ENCODE measurements at regions of chr20 and their contacts with region 1.

Region 1: DNA sequence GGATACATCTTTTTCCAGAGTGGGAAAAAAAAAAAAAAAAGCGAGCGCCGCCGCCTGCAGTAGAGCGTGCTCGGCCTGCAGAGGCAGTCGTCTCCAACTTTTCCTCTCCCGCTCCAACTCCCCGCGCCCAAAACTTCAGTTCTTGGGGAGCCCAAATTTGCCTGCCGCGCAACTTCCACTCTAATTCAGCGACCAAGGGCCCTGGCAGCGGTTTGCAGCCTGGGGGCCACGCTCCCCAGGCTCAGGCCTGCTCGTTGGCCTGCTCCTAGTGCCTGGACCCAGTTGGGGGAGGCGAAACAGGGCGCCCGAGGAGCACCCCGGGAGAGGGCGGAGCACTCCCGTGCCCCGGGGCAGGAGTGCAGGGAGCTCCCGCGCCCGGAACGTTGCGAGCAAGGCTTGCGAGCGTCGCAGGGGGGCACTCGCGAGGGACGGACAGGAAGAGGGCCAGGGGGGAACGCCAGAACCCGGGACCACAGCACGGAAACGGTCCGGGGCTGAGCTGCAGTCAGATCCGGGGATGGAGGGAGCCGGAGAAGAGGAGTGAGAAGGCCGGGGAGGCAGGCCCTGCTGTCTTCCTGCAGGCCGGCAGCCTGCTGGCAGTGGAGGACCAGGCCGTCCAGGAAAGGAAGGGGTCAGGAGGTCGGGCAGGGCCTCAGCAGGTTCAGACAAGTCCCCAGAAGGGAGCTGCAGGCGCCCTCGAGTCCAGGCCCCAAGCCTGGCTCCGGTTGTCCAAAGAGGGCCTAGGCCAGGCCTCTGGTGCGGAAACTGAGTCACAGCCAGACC is at the start of gene STX16:
- DNase-seq: peak; percentile 76 to 87 (median 84)
- ATAC-seq: peak; percentile 83
- H3K4me3 ChIP-seq: peak within 1 kb of the TSS; percentile 94
- H3K4me3 Mint-ChIP-seq: peak within 1 kb of the TSS; percentile 94 to 100 (median 98)
- H3K27ac ChIP-seq: peak within 1 kb of the TSS; percentile 93
- H3K27ac Mint-ChIP-seq: peak within 1 kb of the TSS; percentile 97 to 100 (median 99)
- H3K4me1 ChIP-seq: peaks cover 24 to 32% of the 10 kb centered on the region in 2 donors
- H3K4me1 Mint-ChIP-seq: peaks cover 14 to 35% (median 28%) of the 10 kb centered on the region in 7 donors
- H3K27me3 ChIP-seq: no peaks in the 10 kb centered on the region
- H3K27me3 Mint-ChIP-seq: peaks cover 0 to 4% (median 0%) of the 10 kb centered on the region in 5 donors
- total RNA-seq, gene STX16: 173 to 225 (median 189) TPM

Region 2: DNA sequence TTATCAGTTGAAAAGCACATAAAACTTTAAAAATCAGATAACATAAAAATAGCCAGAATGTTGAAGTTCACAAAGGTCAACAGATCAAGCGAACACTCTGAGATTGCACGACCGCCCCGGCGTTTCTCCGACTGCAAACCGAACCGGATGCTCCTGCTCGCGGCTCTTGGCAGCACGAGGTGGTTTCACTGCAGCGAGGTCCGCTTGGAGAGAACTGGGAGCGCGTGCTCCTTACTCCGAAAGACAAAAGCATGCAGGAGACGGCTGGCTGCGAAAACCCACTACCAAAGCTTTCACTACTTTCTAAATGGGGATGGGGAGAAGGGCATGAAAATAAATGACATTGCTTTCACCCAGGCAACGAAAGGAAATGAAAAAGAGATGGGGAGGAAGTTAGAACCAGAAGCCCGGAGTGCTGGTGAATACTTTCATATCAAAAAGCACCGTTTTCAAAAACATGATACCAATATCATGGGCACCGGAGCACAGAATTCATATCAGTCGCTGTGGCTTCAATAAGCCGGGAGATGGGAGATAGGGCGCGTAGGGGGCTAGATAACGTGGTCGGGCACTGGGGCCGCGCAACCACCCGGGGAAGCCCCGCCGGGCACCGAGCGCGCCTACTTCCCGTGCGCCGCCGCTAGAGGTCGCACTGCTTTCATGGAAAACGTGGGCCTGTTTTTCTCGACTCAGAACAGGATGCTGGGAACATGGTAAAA is 414.2 kb before region 1 on chr20:
- CTCF ChIA-PET with region 1: interaction called, 3 read pairs
- POLR2A ChIA-PET with region 1: interaction called, 5 read pairs
- intact Hi-C with region 1: loop called (anchors 1 kb)
- DNase-seq: peak; percentile 62 to 90 (median 80)
- ATAC-seq: peak; percentile 96
- H3K4me3 ChIP-seq: peak overlapping the region; percentile 65
- H3K4me3 Mint-ChIP-seq: peak overlapping the region; percentile 77 to 94 (median 92)
- H3K27ac ChIP-seq: peak overlapping the region; percentile 76
- H3K27ac Mint-ChIP-seq: peak overlapping the region; percentile 71 to 96 (median 91)
- H3K4me1 ChIP-seq: no peaks in the 10 kb centered on the region
- H3K4me1 Mint-ChIP-seq: peaks cover 2 to 25% (median 17%) of the 10 kb centered on the region in 7 donors
- H3K27me3 ChIP-seq: no peaks in the 10 kb centered on the region
- H3K27me3 Mint-ChIP-seq: no peaks in the 10 kb centered on the region

Region 3: GRCh38 chr20:58692594-58693226 is 41.7 kb after region 1 on chr20 and contains the start of gene NPEPL1:
- CTCF ChIA-PET with region 1: interaction called, 5 read pairs
- POLR2A ChIA-PET with region 1: interaction called, 57 read pairs
- intact Hi-C with region 1: loop called (anchors 1 kb)
- DNase-seq: peak; percentile 37 to 85 (median 55)
- ATAC-seq: peak; percentile 93
- H3K4me3 ChIP-seq: peak within 1 kb of the TSS; percentile 19
- H3K4me3 Mint-ChIP-seq: peak within 1 kb of the TSS; percentile 58 to 89 (median 81)
- H3K27ac ChIP-seq: peak within 1 kb of the TSS; percentile 68
- H3K27ac Mint-ChIP-seq: peak within 1 kb of the TSS; percentile 63 to 87 (median 80)
- H3K4me1 ChIP-seq: peaks cover 4 to 7% of the 10 kb centered on the region in 2 donors
- H3K4me1 Mint-ChIP-seq: peaks cover 4 to 19% (median 10%) of the 10 kb centered on the region in 7 donors
- H3K27me3 ChIP-seq: no peaks in the 10 kb centered on the region
- H3K27me3 Mint-ChIP-seq: no peaks in the 10 kb centered on the region
- total RNA-seq, gene NPEPL1: 32.8 to 76.2 (median 50.5) TPM

Region 4: DNA sequence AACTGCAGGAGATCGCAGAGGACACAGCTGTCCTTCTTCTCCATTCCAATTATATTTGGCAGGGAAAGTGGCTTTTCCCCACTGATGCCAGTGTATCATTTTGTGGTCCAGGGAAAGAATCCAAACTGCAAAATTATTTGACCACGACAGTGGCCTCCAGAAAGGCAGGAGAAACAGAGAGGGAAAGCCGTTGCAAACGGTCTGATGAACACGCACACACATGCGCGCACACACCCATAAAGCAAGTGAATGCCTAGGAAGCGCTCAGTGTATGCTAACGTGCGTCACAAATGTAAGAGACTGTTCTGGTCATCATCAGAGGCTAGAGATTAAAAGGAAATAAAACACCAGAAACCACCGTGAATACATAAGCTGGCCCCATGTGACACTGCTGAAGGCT is 95.7 kb after region 1 on chr20:
- CTCF ChIA-PET with region 1: no interaction called
- POLR2A ChIA-PET with region 1: no interaction called
- intact Hi-C with region 1: no loop called
- DNase-seq: no peak
- ATAC-seq: no peak
- H3K4me3 ChIP-seq: no peak overlapping the region
- H3K4me3 Mint-ChIP-seq: no peak overlapping the region
- H3K27ac ChIP-seq: no peak overlapping the region
- H3K27ac Mint-ChIP-seq: no peak overlapping the region
- H3K4me1 ChIP-seq: no peaks in the 10 kb centered on the region
- H3K4me1 Mint-ChIP-seq: peaks cover 0 to 2% (median 0%) of the 10 kb centered on the region in 7 donors
- H3K27me3 ChIP-seq: no peaks in the 10 kb centered on the region
- H3K27me3 Mint-ChIP-seq: peaks cover 13 to 38% (median 24%) of the 10 kb centered on the region in 5 donors

Region 5: GRCh38 chr20:58850693-58851174 is 199.8 kb after region 1 on chr20 and contains the start of gene GNAS-AS1:
- CTCF ChIA-PET with region 1: interaction called, 11 read pairs
- POLR2A ChIA-PET with region 1: interaction called, 6 read pairs
- intact Hi-C with region 1: loop called (anchors 1 kb)
- DNase-seq: peak; percentile 57 to 81 (median 78)
- ATAC-seq: peak; percentile 87
- H3K4me3 ChIP-seq: peak within 1 kb of the TSS; percentile 61
- H3K4me3 Mint-ChIP-seq: peak within 1 kb of the TSS; percentile 83 to 95 (median 92)
- H3K27ac ChIP-seq: no peak within 1 kb of the TSS
- H3K27ac Mint-ChIP-seq: peak within 1 kb of the TSS in 4 of 9 donors; percentile 19 to 81 (median 54)
- H3K4me1 ChIP-seq: no peaks in the 10 kb centered on the region
- H3K4me1 Mint-ChIP-seq: peaks cover 11 to 36% (median 30%) of the 10 kb centered on the region in 7 donors
- H3K27me3 ChIP-seq: peaks cover 0 to 10% of the 10 kb centered on the region in 2 donors
- H3K27me3 Mint-ChIP-seq: peaks cover 21 to 67% (median 27%) of the 10 kb centered on the region in 5 donors
- total RNA-seq, gene GNAS-AS1: 0.13 to 2.0 (median 1.5) TPM

Region 6: GRCh38 chr20:58898629-58899408 is 247.9 kb after region 1 on chr20:
- CTCF ChIA-PET with region 1: no interaction called
- POLR2A ChIA-PET with region 1: no interaction called
- intact Hi-C with region 1: no loop called
- DNase-seq: no peak
- ATAC-seq: no peak
- H3K4me3 ChIP-seq: no peak overlapping the region
- H3K4me3 Mint-ChIP-seq: peak overlapping the region in 3 of 10 donors; percentile 1 to 60 (median 26)
- H3K27ac ChIP-seq: no peak overlapping the region
- H3K27ac Mint-ChIP-seq: peak overlapping the region in 5 of 9 donors; percentile 41 to 83 (median 58)
- H3K4me1 ChIP-seq: peaks cover 28 to 36% of the 10 kb centered on the region in 2 donors
- H3K4me1 Mint-ChIP-seq: peaks cover 47 to 89% (median 84%) of the 10 kb centered on the region in 7 donors
- H3K27me3 ChIP-seq: no peaks in the 10 kb centered on the region
- H3K27me3 Mint-ChIP-seq: no peaks in the 10 kb centered on the region

Region 7: GRCh38 chr20:59032023-59032712 is 381.2 kb after region 1 on chr20 and contains the start of gene ATP5F1E:
- CTCF ChIA-PET with region 1: no interaction called
- POLR2A ChIA-PET with region 1: interaction called, 9 read pairs
- intact Hi-C with region 1: loop called (anchors 1 to 2 kb)
- DNase-seq: peak; percentile 94 to 98 (median 96)
- ATAC-seq: peak; percentile 98
- H3K4me3 ChIP-seq: peak within 1 kb of the TSS; percentile 62
- H3K4me3 Mint-ChIP-seq: peak within 1 kb of the TSS; percentile 87 to 96 (median 94)
- H3K27ac ChIP-seq: peak within 1 kb of the TSS; percentile 85
- H3K27ac Mint-ChIP-seq: peak within 1 kb of the TSS; percentile 86 to 98 (median 94)
- H3K4me1 ChIP-seq: peaks cover 40 to 44% of the 10 kb centered on the region in 2 donors
- H3K4me1 Mint-ChIP-seq: peaks cover 40 to 62% (median 56%) of the 10 kb centered on the region in 7 donors
- H3K27me3 ChIP-seq: no peaks in the 10 kb centered on the region
- H3K27me3 Mint-ChIP-seq: no peaks in the 10 kb centered on the region
- total RNA-seq, gene ATP5F1E: 57.0 to 81.7 (median 67.4) TPM

Region 8: DNA sequence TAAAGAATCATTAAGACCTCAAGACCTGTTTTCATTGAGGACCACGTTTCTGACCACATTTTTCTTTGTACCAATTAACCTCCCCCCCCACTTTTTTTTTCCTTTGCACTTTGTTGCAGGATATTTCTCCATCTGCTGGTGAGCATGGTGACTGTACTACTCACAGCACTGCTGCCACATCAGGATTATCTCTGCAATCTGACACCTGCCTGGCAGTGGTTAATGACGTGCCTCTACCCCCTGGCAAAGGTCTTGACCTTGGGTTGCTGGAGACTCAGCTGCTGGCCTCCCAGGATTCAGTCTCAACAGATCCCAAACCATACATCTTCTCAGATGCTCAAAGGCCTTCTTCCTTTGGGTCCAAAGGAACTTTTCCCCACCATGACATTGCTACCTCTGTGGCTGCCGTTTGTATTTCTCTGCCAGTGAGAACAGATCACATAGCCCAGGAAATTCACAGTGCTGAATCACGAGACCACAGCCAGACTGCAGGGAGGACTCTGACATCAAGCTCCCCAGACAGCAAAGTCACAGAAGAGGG is 602.9 kb after region 1 on chr20:
- CTCF ChIA-PET with region 1: interaction called, 3 read pairs
- POLR2A ChIA-PET with region 1: interaction called, 3 read pairs
- intact Hi-C with region 1: loop called in 1 of 2 experiments (anchors 10 kb)
- DNase-seq: peak in 7 of 9 donors; percentile 10 to 41 (median 25)
- ATAC-seq: peak; percentile 63
- H3K4me3 ChIP-seq: peak overlapping the region; percentile 27
- H3K4me3 Mint-ChIP-seq: peak overlapping the region; percentile 66 to 83 (median 73)
- H3K27ac ChIP-seq: peak overlapping the region; percentile 58
- H3K27ac Mint-ChIP-seq: peak overlapping the region; percentile 83 to 97 (median 93)
- H3K4me1 ChIP-seq: peaks cover 43 to 45% of the 10 kb centered on the region in 2 donors
- H3K4me1 Mint-ChIP-seq: peaks cover 50 to 82% (median 66%) of the 10 kb centered on the region in 7 donors
- H3K27me3 ChIP-seq: no peaks in the 10 kb centered on the region
- H3K27me3 Mint-ChIP-seq: no peaks in the 10 kb centered on the region

Measured in naive thymus-derived CD4-positive, alpha-beta T cell (primary cell).